MCF 10A (cell line): ENCODE measurements at regions of chr3 and their contacts with region 1.

Region 1: DNA sequence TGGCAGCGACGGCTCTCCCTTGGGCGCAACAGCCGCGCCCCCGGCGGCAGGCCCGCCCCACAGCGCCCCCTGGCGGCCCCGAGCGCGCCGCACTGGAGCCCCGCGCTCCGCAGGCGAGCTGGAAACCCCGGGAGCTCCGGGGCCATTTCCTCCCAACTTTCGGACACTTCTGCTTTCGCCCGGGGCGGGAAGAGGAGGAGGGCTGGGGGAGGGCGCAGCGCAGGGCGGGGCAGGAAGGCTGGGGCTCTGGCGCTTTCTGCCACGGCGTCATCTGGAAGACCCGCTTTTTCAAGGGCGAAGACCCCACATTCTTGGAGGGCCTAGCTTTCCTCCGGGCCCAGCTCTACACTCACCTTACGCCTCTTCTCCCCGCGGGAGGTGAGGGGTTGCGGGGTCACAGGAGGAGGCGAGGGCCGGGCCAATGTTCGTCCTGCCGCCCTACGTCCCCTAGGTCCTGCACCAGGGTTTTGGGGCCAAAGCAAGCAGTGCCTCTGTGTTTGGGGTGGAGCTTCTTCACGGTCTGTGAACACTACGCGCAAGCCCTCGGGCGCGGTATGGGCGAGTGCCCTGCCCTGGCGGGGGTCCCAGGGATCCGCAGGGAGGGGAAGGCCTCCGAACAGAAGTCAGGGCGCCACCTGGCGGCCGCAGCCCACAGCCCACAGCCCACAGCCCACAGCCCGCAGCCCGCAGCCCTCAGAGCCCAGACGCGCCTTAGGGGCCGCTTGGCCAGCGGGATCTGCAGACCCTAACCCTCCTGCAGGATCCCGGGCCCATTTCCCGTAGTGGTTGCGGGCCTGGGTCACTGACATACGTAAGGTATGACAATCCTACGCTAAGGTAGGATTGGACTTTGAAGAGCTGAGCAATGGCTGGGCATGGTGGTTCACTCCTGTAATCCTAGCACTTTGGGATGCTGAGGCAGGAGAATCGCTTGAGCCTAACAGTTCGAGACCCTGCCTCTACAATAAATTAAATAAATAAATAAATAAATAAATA is 31.1 kb downstream of the FOXL2 start:
- DNase-seq: peak; percentile 91
- H3K4me3 Mint-ChIP-seq: peak overlapping the region; percentile 85
- H3K27ac Mint-ChIP-seq: peak overlapping the region; percentile 76
- H3K4me1 Mint-ChIP-seq: peaks cover 6% of the 10 kb centered on the region
- H3K27me3 Mint-ChIP-seq: no peaks in the 10 kb centered on the region
- CTCF ChIP-seq: peak; percentile 94

Region 2: GRCh38 chr3:138417559-138417982 is 498.2 kb before region 1 on chr3:
- CTCF ChIA-PET with region 1: interaction called, 164 read pairs
- POLR2A ChIA-PET with region 1: no interaction called
- intact Hi-C with region 1: no loop called
- DNase-seq: peak; percentile 85
- H3K4me3 Mint-ChIP-seq: no peak overlapping the region
- H3K27ac Mint-ChIP-seq: no peak overlapping the region
- H3K4me1 Mint-ChIP-seq: no peaks in the 10 kb centered on the region
- H3K27me3 Mint-ChIP-seq: no peaks in the 10 kb centered on the region
- CTCF ChIP-seq: peak; percentile 84

Region 3: DNA sequence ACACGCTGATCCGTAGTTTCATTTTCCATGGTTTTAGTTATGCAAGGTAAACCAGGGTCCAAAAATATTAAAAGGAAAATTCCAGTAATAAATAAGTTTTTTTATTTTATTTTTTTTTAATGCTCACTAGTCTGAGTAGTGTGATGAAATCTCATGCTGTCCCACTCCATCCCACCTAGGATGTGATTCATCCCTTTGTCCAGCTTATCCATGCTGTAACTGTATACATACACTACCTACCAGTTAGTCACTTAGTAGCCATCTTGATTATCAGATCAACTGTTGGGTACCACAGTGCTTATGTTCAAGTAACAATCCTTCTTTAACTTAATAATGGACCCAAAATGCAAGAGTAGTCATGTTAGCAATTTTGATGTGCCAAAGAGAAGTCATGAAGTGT is 406.2 kb before region 1 on chr3:
- CTCF ChIA-PET with region 1: no interaction called
- POLR2A ChIA-PET with region 1: no interaction called
- intact Hi-C with region 1: no loop called
- DNase-seq: no peak
- H3K4me3 Mint-ChIP-seq: no peak overlapping the region
- H3K27ac Mint-ChIP-seq: no peak overlapping the region
- H3K4me1 Mint-ChIP-seq: no peaks in the 10 kb centered on the region
- H3K27me3 Mint-ChIP-seq: no peaks in the 10 kb centered on the region
- CTCF ChIP-seq: no peak

Region 4: DNA sequence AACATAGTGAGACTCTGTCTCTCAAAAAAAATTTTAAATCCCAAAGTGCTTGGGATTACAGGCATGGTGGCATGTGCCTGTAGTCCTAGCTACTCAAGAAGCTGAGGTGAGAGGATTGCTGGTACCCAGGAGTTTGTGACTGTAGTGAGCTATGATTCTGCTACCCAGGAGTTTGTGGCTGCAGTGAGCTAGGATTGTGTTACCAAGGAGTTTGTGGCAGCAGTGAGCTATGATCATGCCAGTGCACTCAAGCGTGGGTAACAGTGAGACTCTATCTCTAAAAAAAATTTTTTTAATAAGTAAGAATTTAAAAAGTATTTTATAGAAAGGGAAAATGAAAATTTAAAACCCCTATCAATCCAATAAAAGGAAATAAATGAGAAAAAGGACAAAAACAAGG is 237.7 kb before region 1 on chr3:
- CTCF ChIA-PET with region 1: interaction called, 12 read pairs
- POLR2A ChIA-PET with region 1: no interaction called
- intact Hi-C with region 1: no loop called
- DNase-seq: no peak
- H3K4me3 Mint-ChIP-seq: no peak overlapping the region
- H3K27ac Mint-ChIP-seq: no peak overlapping the region
- H3K4me1 Mint-ChIP-seq: no peaks in the 10 kb centered on the region
- H3K27me3 Mint-ChIP-seq: no peaks in the 10 kb centered on the region
- CTCF ChIP-seq: no peak

Region 5: DNA sequence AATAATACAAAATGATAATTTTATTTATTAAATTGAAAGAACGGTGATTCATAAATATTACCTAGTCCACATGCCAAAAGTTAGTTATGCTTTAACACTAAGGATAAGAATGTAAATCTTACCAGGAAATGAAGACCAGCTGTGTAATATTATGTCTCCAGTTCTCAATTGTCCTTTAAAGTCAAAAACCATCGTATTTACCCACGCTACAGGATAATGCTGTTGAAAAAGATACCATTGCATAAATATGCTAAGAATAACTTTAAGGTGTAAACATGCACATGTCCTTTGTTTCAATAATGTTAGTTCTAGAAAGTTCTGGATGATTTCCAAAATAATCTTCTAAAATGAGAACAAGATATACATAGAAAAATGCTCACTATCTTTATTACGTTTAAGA is 203.7 kb before region 1 on chr3:
- CTCF ChIA-PET with region 1: interaction called, 27 read pairs
- POLR2A ChIA-PET with region 1: interaction called, 3 read pairs
- intact Hi-C with region 1: no loop called
- DNase-seq: no peak
- H3K4me3 Mint-ChIP-seq: no peak overlapping the region
- H3K27ac Mint-ChIP-seq: no peak overlapping the region
- H3K4me1 Mint-ChIP-seq: no peaks in the 10 kb centered on the region
- H3K27me3 Mint-ChIP-seq: no peaks in the 10 kb centered on the region
- CTCF ChIP-seq: no peak

Region 6: DNA sequence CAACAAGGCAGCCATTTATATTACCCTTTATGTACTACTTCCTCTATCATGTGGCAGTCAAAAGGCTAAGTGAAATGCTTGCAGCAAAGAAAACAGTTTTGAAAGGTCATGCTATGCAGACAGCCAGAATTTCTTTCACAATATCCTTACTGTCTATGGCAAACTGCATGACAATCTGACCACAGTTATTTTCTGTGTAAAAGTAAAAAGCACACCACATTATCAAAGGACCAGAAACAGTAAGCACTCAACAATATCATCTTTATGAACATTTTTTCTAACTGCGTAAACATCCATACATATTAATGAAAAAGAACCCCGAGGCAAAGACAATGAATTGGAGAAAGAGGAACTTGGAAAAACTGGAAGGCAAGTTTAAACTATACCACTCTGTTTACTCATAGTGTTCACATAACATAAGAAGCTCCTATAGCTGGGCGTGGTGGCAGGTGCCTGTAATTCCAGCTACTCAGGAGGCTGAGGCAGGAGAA is 129.0 kb before region 1 on chr3:
- CTCF ChIA-PET with region 1: interaction called, 10 read pairs
- POLR2A ChIA-PET with region 1: interaction called, 3 read pairs
- intact Hi-C with region 1: no loop called
- DNase-seq: peak; percentile 50
- H3K4me3 Mint-ChIP-seq: no peak overlapping the region
- H3K27ac Mint-ChIP-seq: peak overlapping the region; percentile 40
- H3K4me1 Mint-ChIP-seq: peaks cover 12% of the 10 kb centered on the region
- H3K27me3 Mint-ChIP-seq: no peaks in the 10 kb centered on the region
- CTCF ChIP-seq: no peak

Region 7: GRCh38 chr3:138862924-138863775 is 52.7 kb before region 1 on chr3:
- CTCF ChIA-PET with region 1: interaction called, 12 read pairs
- POLR2A ChIA-PET with region 1: interaction called, 18 read pairs
- intact Hi-C with region 1: no loop called
- DNase-seq: peak; percentile 94
- H3K4me3 Mint-ChIP-seq: peak overlapping the region; percentile 46
- H3K27ac Mint-ChIP-seq: peak overlapping the region; percentile 89
- H3K4me1 Mint-ChIP-seq: peaks cover 20% of the 10 kb centered on the region
- H3K27me3 Mint-ChIP-seq: no peaks in the 10 kb centered on the region
- CTCF ChIP-seq: no peak

Region 8: DNA sequence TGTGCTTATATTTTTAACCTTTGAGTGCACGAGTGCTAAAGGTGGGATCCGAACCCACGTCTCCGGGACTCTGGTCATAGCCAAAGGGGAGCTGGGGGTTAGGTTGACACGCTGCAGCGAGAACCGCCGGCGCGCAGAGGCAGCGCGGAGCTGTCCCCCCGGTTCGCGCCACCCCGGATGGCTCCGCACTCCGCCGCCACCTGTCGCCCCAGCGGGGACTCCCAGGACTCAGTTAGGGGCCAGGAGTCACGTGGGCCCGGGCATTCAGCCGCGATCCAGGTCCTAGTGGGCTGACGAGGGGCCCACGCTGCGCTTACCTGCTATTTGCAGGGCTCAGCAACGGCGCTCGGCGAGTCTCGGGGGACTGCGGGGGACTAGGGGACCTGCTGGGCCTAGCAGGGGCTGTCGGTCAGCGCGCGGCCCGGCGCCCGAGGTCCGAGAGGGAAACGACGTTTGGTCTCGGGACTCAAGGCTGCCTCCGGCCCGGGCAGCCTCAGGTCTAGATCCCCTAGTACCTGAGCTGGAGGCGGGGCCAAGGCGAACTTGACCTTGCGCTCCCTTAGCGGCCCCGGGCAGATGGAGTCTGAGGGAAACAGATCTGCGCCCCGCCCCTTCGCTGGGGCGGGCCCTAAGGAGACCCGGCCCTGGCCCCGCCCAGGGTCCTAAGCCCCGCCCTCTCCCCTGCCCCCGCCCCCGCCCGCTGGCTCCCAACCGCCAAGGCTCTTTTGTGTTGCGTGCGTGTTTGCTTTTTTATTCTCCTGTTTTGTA is 761.8 kb after region 1 on chr3 and contains the start of gene NMNAT3:
- CTCF ChIA-PET with region 1: no interaction called
- POLR2A ChIA-PET with region 1: no interaction called
- intact Hi-C with region 1: no loop called
- DNase-seq: peak; percentile 78
- H3K4me3 Mint-ChIP-seq: peak within 1 kb of the TSS; percentile 64
- H3K27ac Mint-ChIP-seq: no peak within 1 kb of the TSS
- H3K4me1 Mint-ChIP-seq: no peaks in the 10 kb centered on the region
- H3K27me3 Mint-ChIP-seq: no peaks in the 10 kb centered on the region
- CTCF ChIP-seq: no peak
- total RNA-seq, gene NMNAT3: 1.0 and 1.9 TPM in 2 replicates